Activated CD8-positive, alpha-beta T cell treated with anti-CD3 and anti-CD28 coated beads, Interleukin-2, amount 10 ng/mL, durations not matched to agents 7 days and 5 days (primary cell): ENCODE measurements at regions of chr15 and their contacts with region 1.

Region 1: GRCh38 chr15:52227456-52227855 is 36.3 kb upstream of the GNB5 start:
- DNase-seq: peak; percentile 86
- ATAC-seq: peak; percentile 96
- H3K4me3 Mint-ChIP-seq: no peak overlapping the region
- H3K27ac Mint-ChIP-seq: no peak overlapping the region
- H3K4me1 Mint-ChIP-seq: peaks cover 25% of the 10 kb centered on the region
- H3K27me3 Mint-ChIP-seq: no peaks in the 10 kb centered on the region

Region 2: GRCh38 chr15:52139599-52140491 is 87.6 kb before region 1 on chr15:
- CTCF ChIA-PET with region 1: interaction called, 11 read pairs
- POLR2A ChIA-PET with region 1: interaction called, 3 read pairs
- DNase-seq: peak; percentile 81
- ATAC-seq: peak; percentile 80
- H3K4me3 Mint-ChIP-seq: no peak overlapping the region
- H3K27ac Mint-ChIP-seq: no peak overlapping the region
- H3K4me1 Mint-ChIP-seq: peaks cover 24% of the 10 kb centered on the region
- H3K27me3 Mint-ChIP-seq: no peaks in the 10 kb centered on the region

Region 3: DNA sequence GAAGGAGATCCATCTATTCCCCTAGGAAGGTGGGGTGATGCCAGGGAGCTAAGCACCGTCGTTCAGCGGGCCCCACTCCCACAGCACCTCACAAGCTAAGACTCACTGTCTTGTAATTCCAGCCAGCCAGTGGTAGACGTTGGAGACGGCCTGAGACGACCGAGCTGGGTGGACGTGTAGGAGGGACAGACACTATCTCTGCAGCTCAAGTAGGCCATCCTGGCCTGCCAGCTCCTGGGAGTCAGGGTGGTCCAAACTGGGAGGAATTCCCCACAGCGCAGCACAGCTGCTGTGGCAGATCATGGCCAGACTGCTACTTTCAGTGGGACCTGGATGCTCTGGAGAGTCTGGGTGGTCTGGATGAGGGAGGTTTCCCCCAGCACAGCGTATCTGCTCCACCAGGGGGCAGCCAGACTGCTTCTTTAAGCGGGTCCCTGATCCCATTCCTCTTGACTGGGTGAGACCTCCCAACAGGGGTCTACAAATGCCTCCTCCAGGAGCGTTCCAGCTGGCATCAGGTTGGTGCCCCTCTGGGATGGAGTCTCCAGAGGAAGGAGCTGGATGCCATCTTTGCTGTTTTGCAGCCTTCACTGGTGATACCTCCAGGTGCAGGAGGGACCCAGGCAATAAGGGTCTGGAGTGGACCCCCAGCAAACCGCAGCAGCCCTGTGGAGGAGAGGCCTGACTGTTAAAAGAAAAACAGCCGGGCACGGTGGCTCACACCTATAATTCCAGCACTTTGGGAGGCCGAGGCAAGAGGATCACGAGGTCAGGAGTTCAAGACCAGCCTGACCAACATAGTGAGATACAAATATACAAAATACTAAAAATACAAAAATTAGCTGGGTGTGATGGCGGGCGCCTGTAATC is 63.9 kb before region 1 on chr15:
- CTCF ChIA-PET with region 1: interaction called, 35 read pairs
- POLR2A ChIA-PET with region 1: no interaction called
- DNase-seq: peak; percentile 29
- ATAC-seq: no peak
- H3K4me3 Mint-ChIP-seq: no peak overlapping the region
- H3K27ac Mint-ChIP-seq: no peak overlapping the region
- H3K4me1 Mint-ChIP-seq: peaks cover 15% of the 10 kb centered on the region
- H3K27me3 Mint-ChIP-seq: no peaks in the 10 kb centered on the region

Region 4: GRCh38 chr15:52208306-52208946 is 19.0 kb before region 1 on chr15:
- CTCF ChIA-PET with region 1: interaction called, 93 read pairs
- POLR2A ChIA-PET with region 1: interaction called, 3 read pairs
- DNase-seq: peak; percentile 86
- ATAC-seq: peak; percentile 98
- H3K4me3 Mint-ChIP-seq: no peak overlapping the region
- H3K27ac Mint-ChIP-seq: no peak overlapping the region
- H3K4me1 Mint-ChIP-seq: peaks cover 11% of the 10 kb centered on the region
- H3K27me3 Mint-ChIP-seq: no peaks in the 10 kb centered on the region

Region 5: GRCh38 chr15:52217186-52217585 is 10.3 kb before region 1 on chr15:
- CTCF ChIA-PET with region 1: interaction called, 93 read pairs
- POLR2A ChIA-PET with region 1: interaction called, 3 read pairs
- DNase-seq: peak; percentile 42
- ATAC-seq: peak; percentile 32
- H3K4me3 Mint-ChIP-seq: no peak overlapping the region
- H3K27ac Mint-ChIP-seq: no peak overlapping the region
- H3K4me1 Mint-ChIP-seq: peaks cover 26% of the 10 kb centered on the region
- H3K27me3 Mint-ChIP-seq: no peaks in the 10 kb centered on the region

Region 6: DNA sequence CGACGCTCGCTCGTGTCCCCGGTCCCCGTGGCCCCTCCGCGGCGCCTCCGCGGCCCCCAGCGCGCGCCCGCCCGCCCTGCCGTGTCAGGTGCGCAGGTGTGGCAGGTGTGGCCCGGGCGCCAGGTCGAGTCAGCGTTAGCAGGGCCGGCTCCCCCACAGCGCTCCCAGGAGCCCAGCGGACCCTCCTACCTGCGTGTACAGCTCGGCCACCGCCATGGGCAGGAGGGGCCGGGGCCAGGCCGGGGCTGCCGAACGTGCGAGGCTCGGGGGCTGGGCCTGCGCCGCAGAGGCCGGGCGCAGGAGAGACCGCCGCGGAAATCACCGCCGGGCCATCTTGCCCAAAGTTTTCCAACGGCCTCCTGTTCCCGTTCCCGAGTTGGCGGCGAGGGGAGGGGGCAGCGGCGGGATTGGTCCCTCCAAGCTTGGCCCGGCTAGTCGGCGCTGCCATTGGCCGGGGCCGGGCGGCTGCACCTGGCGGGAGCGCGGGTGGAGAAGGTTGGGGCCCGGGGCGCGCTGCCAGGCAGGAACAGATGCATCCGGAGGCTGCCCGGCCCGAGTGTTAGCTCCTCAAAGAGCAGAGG is 68.1 kb after region 1 on chr15 and contains the start of gene MYO5C:
- CTCF ChIA-PET with region 1: no interaction called
- POLR2A ChIA-PET with region 1: no interaction called
- DNase-seq: no peak
- ATAC-seq: peak; percentile 60
- H3K4me3 Mint-ChIP-seq: peak within 1 kb of the TSS; percentile 42
- H3K27ac Mint-ChIP-seq: no peak within 1 kb of the TSS
- H3K4me1 Mint-ChIP-seq: peaks cover 27% of the 10 kb centered on the region
- H3K27me3 Mint-ChIP-seq: peaks cover 55% of the 10 kb centered on the region
- total RNA-seq, gene MYO5C: 2.5 to 3.2 TPM